Activated CD8-positive, alpha-beta T cell treated with anti-CD3 and anti-CD28 coated beads, Interleukin-2, amount 10 ng/mL, durations not matched to agents 7 days and 5 days (primary cell): ENCODE measurements at regions of chr1 and their contacts with region 1.

Region 1: DNA sequence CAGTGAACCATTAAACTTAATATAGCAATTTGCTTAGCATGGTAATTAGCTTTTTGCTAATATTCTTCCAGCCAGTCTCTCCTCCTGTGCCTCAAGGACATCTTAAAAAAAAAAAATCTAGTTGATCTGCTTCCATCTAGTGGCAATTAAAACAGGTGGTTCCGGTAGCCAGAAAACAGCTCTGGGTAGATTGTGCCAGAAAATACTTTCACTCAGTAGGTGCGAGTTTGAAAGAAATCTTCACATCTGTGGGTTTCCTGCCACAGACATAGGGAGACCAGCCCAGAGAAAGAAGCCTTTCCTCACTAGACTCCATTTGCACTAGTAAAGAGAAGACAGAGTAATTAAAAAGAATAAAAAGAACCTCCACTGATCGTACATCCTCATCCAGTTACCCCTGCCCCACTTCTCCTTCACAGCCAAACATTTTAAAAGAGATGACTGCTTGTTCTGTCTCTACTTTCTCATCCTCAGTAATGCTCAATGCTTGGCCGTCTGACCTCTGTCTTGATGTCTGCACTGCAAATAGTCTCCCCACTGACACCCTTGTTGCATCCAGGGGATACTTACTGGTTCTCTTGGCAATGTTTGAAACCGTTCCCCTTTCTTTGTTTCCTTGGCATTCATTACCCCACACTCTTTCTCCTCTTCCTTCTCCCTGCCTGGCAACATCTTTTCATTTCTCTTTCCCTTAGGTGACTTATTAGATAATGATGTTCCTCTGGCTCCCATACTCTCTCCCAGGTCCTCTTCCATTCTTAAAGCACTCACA is 16.9 kb downstream of the SELL start:
- DNase-seq: peak; percentile 72
- ATAC-seq: peak; percentile 73
- H3K4me3 Mint-ChIP-seq: peak overlapping the region; percentile 27
- H3K27ac Mint-ChIP-seq: peak overlapping the region; percentile 87
- H3K4me1 Mint-ChIP-seq: peaks cover 94% of the 10 kb centered on the region
- H3K27me3 Mint-ChIP-seq: no peaks in the 10 kb centered on the region

Region 2: GRCh38 chr1:169610108-169610507 is 84.4 kb before region 1 on chr1:
- CTCF ChIA-PET with region 1: interaction called, 253 read pairs
- POLR2A ChIA-PET with region 1: interaction called, 10 read pairs
- DNase-seq: no peak
- ATAC-seq: no peak
- H3K4me3 Mint-ChIP-seq: no peak overlapping the region
- H3K27ac Mint-ChIP-seq: no peak overlapping the region
- H3K4me1 Mint-ChIP-seq: peaks cover 14% of the 10 kb centered on the region
- H3K27me3 Mint-ChIP-seq: no peaks in the 10 kb centered on the region

Region 3: GRCh38 chr1:169680377-169681019 is 14.0 kb before region 1 on chr1:
- CTCF ChIA-PET with region 1: interaction called, 40 read pairs
- POLR2A ChIA-PET with region 1: interaction called, 12 read pairs
- DNase-seq: no peak
- ATAC-seq: peak; percentile 45
- H3K4me3 Mint-ChIP-seq: no peak overlapping the region
- H3K27ac Mint-ChIP-seq: peak overlapping the region; percentile 41
- H3K4me1 Mint-ChIP-seq: peaks cover 56% of the 10 kb centered on the region
- H3K27me3 Mint-ChIP-seq: no peaks in the 10 kb centered on the region